Endothelial cell of umbilical vein (primary cell): ENCODE measurements at regions of chr7 and their contacts with region 1.

Region 1: DNA sequence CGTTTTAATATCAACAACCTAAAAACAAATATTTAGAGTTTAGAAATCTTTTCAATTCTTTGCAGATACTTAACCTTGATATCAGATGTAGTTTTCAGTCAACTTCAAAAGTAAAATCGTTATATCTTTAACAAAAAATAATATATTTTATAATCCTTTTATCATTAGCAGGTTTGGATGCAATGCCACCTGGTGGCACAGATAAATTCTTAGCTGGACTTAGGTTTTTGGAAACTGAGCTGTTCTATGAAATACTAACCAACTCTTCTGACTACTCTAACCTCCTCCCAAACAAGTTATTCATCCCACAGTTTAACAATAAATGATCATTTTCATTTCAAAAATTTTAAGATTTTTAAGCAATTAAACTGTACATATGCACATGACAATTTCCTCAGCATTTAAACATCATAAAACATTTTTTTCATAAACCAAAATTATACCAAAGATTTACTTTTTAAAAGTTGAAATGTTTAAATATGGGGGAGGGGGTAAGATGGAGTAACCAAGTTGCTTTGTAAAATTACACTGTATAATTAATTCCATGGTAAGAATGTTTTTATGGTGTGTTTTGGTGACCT is 56.9 kb downstream of the HIBADH start:
- DNase-seq: peak; percentile 63
- H3K4me3 ChIP-seq: peak overlapping the region in 1 of 3 experiments; percentile 24
- H3K27ac ChIP-seq: peak overlapping the region; percentile 66
- H3K4me1 ChIP-seq: peaks cover 25% of the 10 kb centered on the region
- H3K27me3 ChIP-seq: no peaks in the 10 kb centered on the region
- CTCF ChIP-seq: peak in 1 of 2 donors; percentile 41
- POLR2A ChIP-seq: no peak

Region 2: GRCh38 chr7:26200444-26201246 is 1405.1 kb before region 1 on chr7 and contains the start of gene HNRNPA2B1:
- CTCF ChIA-PET with region 1: no interaction called
- POLR2A ChIA-PET with region 1: no interaction called
- dilution Hi-C with region 1: no loop called
- intact Hi-C with region 1: loop called (anchors 5 kb)
- DNase-seq: peak; percentile 99
- H3K4me3 ChIP-seq: peak within 1 kb of the TSS; percentile 98 to 100 (median 98)
- H3K27ac ChIP-seq: peak within 1 kb of the TSS; percentile 97
- H3K4me1 ChIP-seq: peaks cover 40% of the 10 kb centered on the region
- H3K27me3 ChIP-seq: no peaks in the 10 kb centered on the region
- CTCF ChIP-seq: no peak
- POLR2A ChIP-seq: peak; percentile 100
- total RNA-seq, gene HNRNPA2B1: 703 and 717 TPM in 2 replicates

Region 3: DNA sequence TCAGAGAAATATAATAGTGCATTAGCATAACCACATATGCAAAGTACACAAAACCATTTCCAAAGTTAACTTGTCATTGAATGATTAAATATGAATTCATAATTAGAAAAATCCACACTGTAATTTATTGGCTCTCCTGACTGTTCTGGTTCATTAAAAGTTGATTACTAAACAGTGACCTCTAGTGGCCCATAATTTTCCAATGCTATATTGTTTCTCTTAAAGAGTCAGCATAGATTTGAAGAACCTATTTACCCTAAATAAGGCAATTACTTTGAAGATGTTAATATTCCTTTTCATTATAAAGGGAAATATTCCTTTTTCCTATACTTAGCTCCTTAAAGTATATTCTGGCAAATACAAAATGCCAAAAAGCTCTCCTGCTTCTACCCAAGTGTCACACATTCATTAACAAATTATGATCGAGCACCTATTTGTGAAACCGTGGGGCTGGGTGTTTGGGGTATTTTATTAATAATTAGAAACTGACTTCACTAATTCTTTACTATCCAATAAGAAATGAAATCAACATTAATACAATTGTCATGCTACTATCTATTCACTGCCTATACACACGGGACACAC is 29.3 kb before region 1 on chr7:
- CTCF ChIA-PET with region 1: interaction called, 15 read pairs
- POLR2A ChIA-PET with region 1: no interaction called
- dilution Hi-C with region 1: no loop called
- intact Hi-C with region 1: no loop called
- DNase-seq: peak; percentile 70
- H3K4me3 ChIP-seq: no peak overlapping the region
- H3K27ac ChIP-seq: no peak overlapping the region
- H3K4me1 ChIP-seq: no peaks in the 10 kb centered on the region
- H3K27me3 ChIP-seq: no peaks in the 10 kb centered on the region
- CTCF ChIP-seq: peak; percentile 22 to 26
- POLR2A ChIP-seq: no peak

Region 4: GRCh38 chr7:27640914-27641580 is 35.3 kb after region 1 on chr7:
- CTCF ChIA-PET with region 1: interaction called, 20 read pairs
- POLR2A ChIA-PET with region 1: interaction called, 6 read pairs
- dilution Hi-C with region 1: no loop called
- intact Hi-C with region 1: loop called (anchors 1 kb)
- DNase-seq: peak; percentile 96
- H3K4me3 ChIP-seq: peak overlapping the region in 1 of 3 experiments; percentile 36
- H3K27ac ChIP-seq: peak overlapping the region; percentile 85
- H3K4me1 ChIP-seq: peaks cover 18% of the 10 kb centered on the region
- H3K27me3 ChIP-seq: no peaks in the 10 kb centered on the region
- CTCF ChIP-seq: no peak
- POLR2A ChIP-seq: no peak

Region 5: DNA sequence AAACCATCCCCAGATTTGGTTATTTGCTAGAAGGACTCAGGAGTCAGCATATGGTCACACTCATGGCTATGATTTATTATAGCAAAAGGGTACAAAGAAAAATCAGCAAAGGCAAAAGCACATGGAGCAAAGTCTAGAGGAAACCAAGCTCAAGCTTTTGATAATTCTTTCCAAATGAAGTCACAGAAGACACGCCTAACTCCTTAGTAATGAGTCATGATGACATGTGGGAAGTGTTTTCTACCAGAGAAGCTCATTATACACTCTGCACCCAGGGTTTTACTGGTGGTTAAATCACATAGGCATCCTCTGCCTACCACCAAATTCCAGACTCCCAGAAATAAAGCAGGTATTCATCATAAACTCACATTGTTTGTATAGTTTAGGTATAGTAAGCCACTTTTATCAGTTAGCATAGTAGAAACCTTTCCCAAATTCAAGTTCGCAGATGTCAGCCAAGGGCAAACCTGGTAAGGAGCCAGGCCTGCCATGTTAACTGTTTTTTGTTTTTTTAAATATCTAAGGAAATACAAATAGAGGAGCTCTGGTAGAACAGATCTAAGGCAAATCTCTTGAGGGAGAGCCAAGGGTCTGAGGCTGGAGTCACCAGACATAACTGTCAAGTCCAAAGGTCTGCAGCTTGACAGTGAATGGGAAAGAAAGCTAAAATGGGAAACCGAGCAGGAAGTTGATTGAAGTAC is 72.3 kb after region 1 on chr7:
- CTCF ChIA-PET with region 1: interaction called, 8 read pairs
- POLR2A ChIA-PET with region 1: no interaction called
- dilution Hi-C with region 1: no loop called
- intact Hi-C with region 1: loop called (anchors 5 kb)
- DNase-seq: peak; percentile 78
- H3K4me3 ChIP-seq: no peak overlapping the region
- H3K27ac ChIP-seq: peak overlapping the region; percentile 94
- H3K4me1 ChIP-seq: peaks cover 22% of the 10 kb centered on the region
- H3K27me3 ChIP-seq: no peaks in the 10 kb centered on the region
- CTCF ChIP-seq: no peak
- POLR2A ChIP-seq: peak; percentile 25

Region 6: GRCh38 chr7:27723085-27723484 is 117.3 kb after region 1 on chr7:
- CTCF ChIA-PET with region 1: interaction called, 11 read pairs
- POLR2A ChIA-PET with region 1: no interaction called
- dilution Hi-C with region 1: no loop called
- intact Hi-C with region 1: no loop called
- DNase-seq: peak; percentile 89
- H3K4me3 ChIP-seq: no peak overlapping the region
- H3K27ac ChIP-seq: no peak overlapping the region
- H3K4me1 ChIP-seq: no peaks in the 10 kb centered on the region
- H3K27me3 ChIP-seq: no peaks in the 10 kb centered on the region
- CTCF ChIP-seq: peak; percentile 28 to 37
- POLR2A ChIP-seq: no peak

Region 7: GRCh38 chr7:27745064-27745583 is 139.3 kb after region 1 on chr7:
- CTCF ChIA-PET with region 1: interaction called, 16 read pairs
- POLR2A ChIA-PET with region 1: no interaction called
- dilution Hi-C with region 1: no loop called
- intact Hi-C with region 1: loop called (anchors 1 kb)
- DNase-seq: peak; percentile 85
- H3K4me3 ChIP-seq: no peak overlapping the region
- H3K27ac ChIP-seq: peak overlapping the region; percentile 49
- H3K4me1 ChIP-seq: peaks cover 11% of the 10 kb centered on the region
- H3K27me3 ChIP-seq: no peaks in the 10 kb centered on the region
- CTCF ChIP-seq: peak; percentile 54 to 65
- POLR2A ChIP-seq: no peak

Region 8: GRCh38 chr7:27944643-27945042 is 338.9 kb after region 1 on chr7:
- CTCF ChIA-PET with region 1: no interaction called
- POLR2A ChIA-PET with region 1: no interaction called
- dilution Hi-C with region 1: no loop called
- intact Hi-C with region 1: no loop called
- DNase-seq: no peak
- H3K4me3 ChIP-seq: no peak overlapping the region
- H3K27ac ChIP-seq: no peak overlapping the region
- H3K4me1 ChIP-seq: no peaks in the 10 kb centered on the region
- H3K27me3 ChIP-seq: no peaks in the 10 kb centered on the region
- CTCF ChIP-seq: no peak
- POLR2A ChIP-seq: no peak